Right cardiac atrium (tissue), 5 donors: ENCODE measurements at regions of chr1 and their contacts with region 1.

Region 1: GRCh38 chr1:119808972-119809550 is 2.2 kb downstream of the REG4 start:
- DNase-seq: peak; percentile 62 to 82 (median 81)
- ATAC-seq: peak; percentile 73 to 75
- H3K4me3 ChIP-seq: no peak overlapping the region
- H3K27ac ChIP-seq: no peak overlapping the region
- H3K4me1 ChIP-seq: no peaks in the 10 kb centered on the region
- H3K27me3 ChIP-seq: no peaks in the 10 kb centered on the region

Region 2: GRCh38 chr1:119743781-119744597 is 65.1 kb before region 1 on chr1:
- intact Hi-C with region 1: loop called in 1 of 4 experiments (anchors 5 kb)
- DNase-seq: peak; percentile 55 to 78 (median 77)
- ATAC-seq: peak; percentile 55 to 69
- H3K4me3 ChIP-seq: no peak overlapping the region
- H3K27ac ChIP-seq: peak overlapping the region; percentile 6
- H3K4me1 ChIP-seq: peaks cover 4% of the 10 kb centered on the region
- H3K27me3 ChIP-seq: no peaks in the 10 kb centered on the region